A673 (cell line): ENCODE measurements at regions of chr2 and their contacts with region 1.

Region 1: DNA sequence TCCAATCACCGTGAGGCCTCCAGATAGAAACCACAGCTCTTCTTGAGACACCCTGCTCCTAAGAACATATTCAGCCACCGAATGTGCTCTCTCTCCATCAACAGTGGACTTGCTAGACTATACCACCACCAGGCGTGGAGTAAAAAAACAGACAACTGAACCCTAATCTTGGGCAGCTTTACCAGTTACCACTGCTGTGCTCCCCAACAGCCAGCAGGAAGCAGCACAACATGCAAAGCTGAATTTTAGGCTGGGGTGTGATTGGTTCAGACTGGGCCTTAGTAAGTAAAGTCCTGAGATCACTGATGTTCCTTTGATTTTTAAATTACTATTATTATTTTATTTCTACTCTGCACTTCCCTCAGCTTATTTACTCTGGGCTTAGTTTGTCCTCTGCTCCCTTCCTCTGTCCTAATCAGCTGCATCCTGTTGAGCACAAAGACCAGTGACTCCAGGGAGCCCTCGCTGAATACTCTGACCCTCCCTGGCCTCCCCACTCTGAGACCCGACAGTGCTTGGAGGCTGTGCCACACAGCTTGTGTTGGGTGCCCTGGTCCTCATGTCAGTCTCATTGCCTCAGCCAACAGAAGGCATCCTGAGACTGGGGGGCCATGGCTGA is 21.9 kb downstream of the MRPL35 start:
- DNase-seq: peak; percentile 81
- H3K4me3 ChIP-seq: no peak overlapping the region
- H3K27ac ChIP-seq: no peak overlapping the region
- H3K4me1 ChIP-seq: peaks cover 29% of the 10 kb centered on the region
- H3K27me3 ChIP-seq: no peaks in the 10 kb centered on the region
- CTCF ChIP-seq: peak; percentile 96

Region 2: GRCh38 chr2:86297382-86298147 is 76.4 kb after region 1 on chr2:
- CTCF ChIA-PET with region 1: no interaction called
- POLR2A ChIA-PET with region 1: no interaction called
- intact Hi-C with region 1: loop called (anchors 2 kb)
- DNase-seq: peak; percentile 17
- H3K4me3 ChIP-seq: no peak overlapping the region
- H3K27ac ChIP-seq: no peak overlapping the region
- H3K4me1 ChIP-seq: peaks cover 11% of the 10 kb centered on the region
- H3K27me3 ChIP-seq: no peaks in the 10 kb centered on the region
- CTCF ChIP-seq: peak; percentile 52

Region 3: DNA sequence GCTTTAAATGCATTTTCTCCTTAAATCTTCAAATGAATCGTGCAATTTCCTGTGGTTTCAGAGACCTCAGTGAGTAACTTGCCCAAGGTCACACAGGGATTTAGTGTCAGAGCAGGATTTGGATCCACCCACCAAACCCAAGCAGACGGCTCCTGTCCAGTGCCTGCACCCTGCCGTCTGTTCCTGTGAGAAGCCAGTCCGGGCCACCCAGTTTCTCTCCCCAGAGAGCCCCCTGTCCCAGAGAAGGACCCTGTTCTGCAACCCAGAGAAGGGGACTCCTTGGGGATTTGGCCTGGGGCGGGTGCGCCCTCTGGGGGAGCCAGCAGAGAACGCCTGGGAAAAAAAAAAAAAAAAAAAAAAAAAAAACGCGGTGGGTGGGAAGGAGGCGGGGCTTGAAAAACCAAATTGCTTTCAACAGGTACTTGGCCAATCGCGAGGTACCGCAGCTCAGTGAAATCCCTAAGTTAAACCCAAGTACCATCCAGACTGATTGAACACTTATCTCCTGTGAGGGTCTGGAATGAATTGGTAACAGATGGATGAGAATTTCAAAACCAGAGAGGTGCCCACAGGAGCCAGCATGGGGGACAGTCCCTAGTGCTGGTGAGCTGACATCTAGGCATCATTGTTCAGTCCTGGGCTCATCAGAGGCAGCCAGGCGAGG is 147.1 kb after region 1 on chr2:
- CTCF ChIA-PET with region 1: interaction called, 8 read pairs
- POLR2A ChIA-PET with region 1: no interaction called
- intact Hi-C with region 1: loop called (anchors 2 kb)
- DNase-seq: peak; percentile 72
- H3K4me3 ChIP-seq: no peak overlapping the region
- H3K27ac ChIP-seq: no peak overlapping the region
- H3K4me1 ChIP-seq: peaks cover 5% of the 10 kb centered on the region
- H3K27me3 ChIP-seq: no peaks in the 10 kb centered on the region
- CTCF ChIP-seq: peak; percentile 86